Vagina (tissue), 2 donors: ENCODE measurements at regions of chr12 and their contacts with region 1.

Region 1: GRCh38 chr12:110312581-110313360 is 31.7 kb downstream of the ATP2A2 start:
- DNase-seq: no peak
- H3K4me3 ChIP-seq: no peak overlapping the region
- H3K27ac ChIP-seq: peak overlapping the region; percentile 36
- H3K4me1 ChIP-seq: peaks cover 57% of the 10 kb centered on the region
- H3K27me3 ChIP-seq: no peaks in the 10 kb centered on the region
- CTCF ChIP-seq: no peak
- POLR2A ChIP-seq: no peak

Region 2: GRCh38 chr12:110205931-110206330 is 106.8 kb before region 1 on chr12:
- intact Hi-C with region 1: no loop called
- DNase-seq: no peak
- H3K4me3 ChIP-seq: no peak overlapping the region
- H3K27ac ChIP-seq: no peak overlapping the region
- H3K4me1 ChIP-seq: no peaks in the 10 kb centered on the region
- H3K27me3 ChIP-seq: no peaks in the 10 kb centered on the region
- CTCF ChIP-seq: no peak
- POLR2A ChIP-seq: no peak

Region 3: GRCh38 chr12:111230649-111231048 is 917.9 kb after region 1 on chr12:
- intact Hi-C with region 1: loop called (anchors 5 kb)
- DNase-seq: no peak
- H3K4me3 ChIP-seq: no peak overlapping the region
- H3K27ac ChIP-seq: no peak overlapping the region
- H3K4me1 ChIP-seq: no peaks in the 10 kb centered on the region
- H3K27me3 ChIP-seq: no peaks in the 10 kb centered on the region
- CTCF ChIP-seq: no peak
- POLR2A ChIP-seq: no peak